Cardiac septum (tissue), 1 donor: ENCODE measurements at regions of chr6 and their contacts with region 1.

Region 1: DNA sequence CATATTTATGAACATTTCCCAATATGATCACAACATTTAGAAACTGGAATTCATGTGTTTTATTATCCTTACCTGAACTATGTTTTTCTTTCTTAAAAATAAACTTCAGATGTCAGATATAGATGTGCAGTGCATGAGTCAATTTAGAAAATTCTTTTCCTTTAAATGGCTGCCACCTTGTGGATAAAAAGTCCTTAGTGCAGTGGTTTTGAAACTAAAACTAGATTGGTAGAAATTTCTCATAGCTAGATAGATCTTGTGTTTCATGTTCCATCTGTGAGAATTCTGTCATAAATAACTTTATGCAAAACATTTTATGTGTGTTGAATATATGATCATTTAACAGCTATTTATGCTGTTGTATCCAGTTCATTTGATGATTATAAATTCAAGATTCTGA is 134.9 kb downstream of the KLHL32 start:
- DNase-seq: no peak

Region 2: DNA sequence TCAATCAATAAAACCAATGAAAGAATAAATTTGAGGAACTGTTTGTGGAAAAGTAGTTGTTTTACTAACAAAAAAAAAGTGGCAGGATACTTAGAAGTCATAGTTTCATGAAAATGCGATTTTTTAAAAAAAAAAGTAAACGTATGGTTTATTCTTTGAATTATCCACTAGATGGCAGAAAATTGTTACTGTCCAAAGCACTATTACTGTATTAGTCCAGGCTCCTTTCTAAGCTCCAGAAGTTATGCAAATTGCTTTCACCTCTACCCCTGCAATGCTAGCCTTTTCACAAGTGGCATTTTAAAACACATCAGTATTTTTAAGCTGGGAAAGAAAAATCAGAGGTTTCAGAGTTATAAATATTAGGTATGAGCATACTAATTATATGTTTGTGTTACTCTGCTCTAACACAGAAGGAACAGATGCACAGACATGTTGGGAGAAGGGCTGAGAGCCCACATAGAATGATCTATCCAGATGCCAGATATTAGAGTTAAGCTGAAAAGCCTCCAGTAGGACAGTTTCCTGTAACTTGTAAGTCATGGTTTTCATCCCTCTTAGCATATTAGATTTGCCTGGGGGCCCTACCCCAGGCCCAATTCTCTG is 432.6 kb before region 1 on chr6:
- intact Hi-C with region 1: loop called (anchors 2 kb)
- DNase-seq: no peak

Region 3: DNA sequence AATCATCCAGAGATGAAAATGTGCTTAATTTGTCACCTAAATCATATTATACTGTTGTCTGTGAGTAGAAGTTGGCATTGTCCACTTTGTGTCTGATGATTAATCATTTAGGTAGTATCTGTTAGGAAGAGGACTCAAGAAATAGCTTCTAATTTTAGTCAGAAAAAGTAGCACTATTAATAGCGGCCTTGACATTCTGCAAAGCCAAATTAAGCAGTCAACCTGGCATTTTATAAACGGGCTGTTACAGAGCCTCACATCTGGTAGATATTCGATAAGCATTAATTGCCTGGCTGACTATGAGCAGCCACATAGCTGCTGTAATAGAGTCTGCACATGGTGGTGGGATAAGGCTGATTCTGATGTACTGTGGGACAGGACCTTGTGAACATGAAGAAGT is 35.5 kb before region 1 on chr6:
- intact Hi-C with region 1: no loop called
- DNase-seq: no peak